B cell (primary cell): ENCODE measurements at regions of chr1 and their contacts with region 1.

Region 1: DNA sequence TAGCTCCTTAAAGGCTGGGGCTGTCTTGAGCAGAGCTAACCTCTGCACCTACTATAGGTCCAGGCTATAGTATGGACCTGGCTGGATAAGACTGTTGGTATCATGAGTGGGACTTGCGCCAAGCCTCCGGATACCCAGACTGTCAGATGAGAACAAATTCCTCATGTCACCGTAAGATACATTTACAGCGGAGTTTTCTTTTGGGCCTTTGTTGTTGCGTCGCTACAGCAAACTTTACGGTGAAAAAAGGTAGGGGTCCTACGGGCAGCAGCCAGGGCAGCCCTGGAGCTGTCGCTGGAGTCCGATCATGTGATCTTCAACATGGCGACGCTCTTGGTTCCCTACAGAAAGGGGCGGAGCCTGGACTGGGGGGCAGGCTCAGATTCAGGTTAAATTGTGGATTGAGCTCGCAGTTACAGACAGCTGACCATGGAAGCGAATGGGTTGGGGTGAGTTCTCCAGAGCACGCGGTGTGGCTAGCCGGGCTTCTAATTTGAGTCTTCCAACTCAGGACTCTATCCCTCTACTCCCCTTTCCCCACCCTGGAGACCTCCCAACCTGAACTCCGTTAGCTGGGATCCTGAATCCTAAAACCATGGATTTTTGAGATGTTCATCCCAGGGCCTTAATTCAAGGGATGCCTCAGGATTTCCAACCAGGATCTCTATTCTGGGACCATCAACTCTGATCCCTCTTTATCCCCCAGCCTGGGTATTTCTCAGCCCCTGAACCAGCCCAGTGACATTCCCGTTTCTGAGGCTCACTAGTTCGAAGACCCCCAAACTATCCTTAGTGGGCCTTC is at the start of gene UROD:
- DNase-seq: peak; percentile 94
- ATAC-seq: peak; percentile 83
- H3K4me3 ChIP-seq: peak within 1 kb of the TSS; percentile 59 to 89 (median 78)
- H3K4me3 Mint-ChIP-seq: peak within 1 kb of the TSS; percentile 91
- H3K27ac ChIP-seq: peak within 1 kb of the TSS; percentile 66 to 79
- H3K27ac Mint-ChIP-seq: peak within 1 kb of the TSS; percentile 89
- H3K4me1 ChIP-seq: peaks cover 31 to 42% of the 10 kb centered on the region in 2 donors
- H3K4me1 Mint-ChIP-seq: peaks cover 43% of the 10 kb centered on the region
- H3K27me3 ChIP-seq: no peaks in the 10 kb centered on the region
- H3K27me3 Mint-ChIP-seq: no peaks in the 10 kb centered on the region
- CTCF ChIP-seq: no peak
- total RNA-seq, gene UROD: 57.3 and 65.5 TPM in 2 replicates

Region 2: GRCh38 chr1:44660176-44660575 is 351.9 kb before region 1 on chr1:
- CTCF ChIA-PET with region 1: no interaction called
- POLR2A ChIA-PET with region 1: no interaction called
- intact Hi-C with region 1: no loop called
- DNase-seq: no peak
- ATAC-seq: no peak
- H3K4me3 ChIP-seq: no peak overlapping the region
- H3K4me3 Mint-ChIP-seq: no peak overlapping the region
- H3K27ac ChIP-seq: no peak overlapping the region
- H3K27ac Mint-ChIP-seq: no peak overlapping the region
- H3K4me1 ChIP-seq: peaks cover 9% of the 10 kb centered on the region in 2 donors
- H3K4me1 Mint-ChIP-seq: peaks cover 13% of the 10 kb centered on the region
- H3K27me3 ChIP-seq: no peaks in the 10 kb centered on the region
- H3K27me3 Mint-ChIP-seq: no peaks in the 10 kb centered on the region
- CTCF ChIP-seq: no peak

Region 3: DNA sequence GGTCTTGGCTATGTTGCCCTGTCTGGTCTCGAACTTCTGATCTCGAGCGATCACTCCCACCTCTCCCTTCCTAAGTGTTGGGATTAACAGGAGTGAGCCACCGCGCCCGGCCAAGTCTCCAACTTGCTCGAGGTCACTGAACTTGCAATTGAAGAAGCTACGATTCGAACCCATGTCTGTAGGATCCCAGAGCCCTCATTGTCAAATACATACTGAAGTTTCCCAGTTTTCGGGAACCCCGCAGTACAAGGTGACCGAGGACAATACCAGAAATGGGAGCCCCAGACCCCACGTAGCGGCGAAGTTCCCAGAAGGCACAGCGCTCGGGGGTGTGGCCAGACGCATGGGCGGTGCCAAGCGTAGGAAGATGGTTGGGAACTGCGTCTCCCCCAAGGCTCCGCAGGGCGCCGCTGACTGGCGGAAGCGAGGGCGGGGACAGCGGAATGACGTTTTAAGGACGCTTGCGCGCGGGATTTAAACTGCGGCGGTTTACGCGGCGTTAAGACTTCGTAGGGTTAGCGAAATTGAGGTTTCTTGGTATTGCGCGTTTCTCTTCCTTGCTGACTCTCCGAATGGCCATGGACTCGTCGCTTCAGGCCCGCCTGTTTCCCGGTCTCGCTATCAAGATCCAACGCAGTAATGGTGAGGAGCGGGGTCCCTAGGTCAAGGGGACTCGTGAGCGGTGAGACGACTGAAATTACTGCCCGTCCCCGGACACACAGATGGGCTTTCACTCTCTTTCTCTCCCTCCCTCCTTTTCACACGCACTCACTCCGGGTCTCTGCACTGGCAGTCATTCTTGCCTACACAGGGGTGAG is 272.5 kb before region 1 on chr1 and contains the start of gene KIF2C:
- CTCF ChIA-PET with region 1: no interaction called
- POLR2A ChIA-PET with region 1: no interaction called
- intact Hi-C with region 1: loop called (anchors 1 kb)
- DNase-seq: peak; percentile 97
- ATAC-seq: peak; percentile 100
- H3K4me3 ChIP-seq: peak within 1 kb of the TSS; percentile 54 to 90 (median 87)
- H3K4me3 Mint-ChIP-seq: peak within 1 kb of the TSS; percentile 95
- H3K27ac ChIP-seq: peak within 1 kb of the TSS; percentile 60 to 85
- H3K27ac Mint-ChIP-seq: peak within 1 kb of the TSS; percentile 93
- H3K4me1 ChIP-seq: peaks cover 7 to 12% of the 10 kb centered on the region in 2 donors
- H3K4me1 Mint-ChIP-seq: peaks cover 17% of the 10 kb centered on the region
- H3K27me3 ChIP-seq: no peaks in the 10 kb centered on the region
- H3K27me3 Mint-ChIP-seq: no peaks in the 10 kb centered on the region
- CTCF ChIP-seq: no peak
- total RNA-seq, gene KIF2C: 0.25 and 0.51 TPM in 2 replicates

Region 4: DNA sequence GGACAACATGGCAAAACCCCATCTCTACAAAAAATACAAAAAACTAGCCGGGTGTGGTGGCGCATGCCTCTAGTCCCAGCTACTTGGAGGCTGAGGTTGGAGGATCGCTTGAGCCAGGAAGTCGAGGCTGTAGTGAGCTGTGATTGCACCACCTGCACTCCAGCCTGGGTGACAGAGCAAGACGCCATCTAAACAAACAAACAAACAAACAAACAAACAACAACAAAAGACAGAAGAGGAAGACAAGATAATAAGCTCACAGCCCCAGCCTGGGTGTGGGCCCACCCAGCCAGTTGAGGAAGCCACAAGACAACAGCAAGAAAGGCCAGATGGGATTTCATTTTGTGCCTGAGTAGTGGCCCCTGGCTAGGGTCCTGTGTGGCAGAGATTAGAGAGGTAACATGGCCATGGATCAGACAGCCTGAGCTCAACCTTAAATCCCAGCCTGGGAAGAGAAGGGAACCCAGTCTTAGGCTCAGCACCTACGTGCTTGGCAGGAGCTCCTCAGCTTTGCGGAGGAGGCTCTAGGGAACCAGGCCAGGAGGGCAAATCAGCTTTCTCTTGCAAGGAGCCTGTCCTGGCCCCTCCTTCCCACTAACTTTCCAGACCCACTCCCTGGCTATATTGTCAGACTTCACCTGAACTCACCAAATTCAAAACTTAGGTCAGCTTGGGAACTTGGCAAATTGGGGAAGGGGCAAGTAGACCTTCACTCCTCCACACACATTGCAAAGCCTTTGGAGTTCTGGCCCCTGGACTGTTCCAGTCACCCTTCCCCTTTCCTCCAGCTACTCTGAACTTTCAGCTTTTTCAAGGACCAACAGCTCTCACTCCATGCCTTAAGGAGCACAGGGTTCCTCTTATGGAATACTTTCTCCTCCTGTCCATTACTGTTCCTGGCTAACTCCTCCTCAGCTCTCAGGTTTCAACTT is 219.0 kb before region 1 on chr1:
- CTCF ChIA-PET with region 1: interaction called, 24 read pairs
- POLR2A ChIA-PET with region 1: interaction called, 7 read pairs
- intact Hi-C with region 1: no loop called
- DNase-seq: no peak
- ATAC-seq: no peak
- H3K4me3 ChIP-seq: no peak overlapping the region
- H3K4me3 Mint-ChIP-seq: no peak overlapping the region
- H3K27ac ChIP-seq: no peak overlapping the region
- H3K27ac Mint-ChIP-seq: no peak overlapping the region
- H3K4me1 ChIP-seq: no peaks in the 10 kb centered on the region
- H3K4me1 Mint-ChIP-seq: no peaks in the 10 kb centered on the region
- H3K27me3 ChIP-seq: no peaks in the 10 kb centered on the region
- H3K27me3 Mint-ChIP-seq: no peaks in the 10 kb centered on the region
- CTCF ChIP-seq: no peak

Region 5: DNA sequence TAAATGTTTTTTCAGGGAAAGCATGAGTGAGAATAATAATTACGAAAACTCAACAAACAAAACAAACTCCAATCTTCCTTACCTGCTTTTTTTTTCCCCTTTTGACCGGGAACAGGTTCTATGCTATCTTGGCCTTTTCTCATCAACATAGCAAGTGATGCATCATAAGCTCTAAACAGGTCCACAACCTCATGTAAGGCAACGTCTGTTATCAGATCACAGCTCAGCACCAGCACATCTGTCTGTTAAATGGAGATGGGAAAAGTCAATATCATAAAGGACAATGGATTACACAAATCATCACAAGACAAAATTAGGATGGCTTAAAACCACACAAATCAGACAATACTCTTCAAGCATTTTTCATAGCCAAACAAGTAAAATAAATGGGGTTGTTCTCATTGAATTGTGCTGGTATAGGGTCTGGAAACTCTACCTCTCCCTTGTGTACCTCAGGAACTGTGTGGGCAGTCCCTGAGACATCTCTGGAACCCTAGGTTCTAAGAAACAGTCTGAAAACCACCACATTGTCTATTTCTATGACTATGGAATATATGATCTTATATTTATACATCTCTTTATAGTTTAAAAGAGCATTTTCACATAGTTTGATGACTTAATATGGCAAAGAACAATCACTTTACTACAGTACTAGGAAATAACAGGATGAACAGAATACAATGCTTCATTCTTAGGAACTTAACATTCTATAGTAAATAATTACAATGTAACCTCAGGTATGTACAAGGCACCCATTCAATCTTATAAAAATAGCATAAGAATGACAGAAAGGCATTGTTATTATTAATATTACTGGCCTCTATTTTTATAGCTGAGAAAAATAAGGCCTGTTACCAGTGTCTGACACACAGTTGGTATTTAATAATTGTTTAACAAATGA is 70.4 kb before region 1 on chr1:
- CTCF ChIA-PET with region 1: no interaction called
- POLR2A ChIA-PET with region 1: no interaction called
- intact Hi-C with region 1: no loop called
- DNase-seq: no peak
- ATAC-seq: no peak
- H3K4me3 ChIP-seq: no peak overlapping the region
- H3K4me3 Mint-ChIP-seq: no peak overlapping the region
- H3K27ac ChIP-seq: no peak overlapping the region
- H3K27ac Mint-ChIP-seq: no peak overlapping the region
- H3K4me1 ChIP-seq: no peaks in the 10 kb centered on the region
- H3K4me1 Mint-ChIP-seq: no peaks in the 10 kb centered on the region
- H3K27me3 ChIP-seq: no peaks in the 10 kb centered on the region
- H3K27me3 Mint-ChIP-seq: no peaks in the 10 kb centered on the region
- CTCF ChIP-seq: no peak

Region 6: DNA sequence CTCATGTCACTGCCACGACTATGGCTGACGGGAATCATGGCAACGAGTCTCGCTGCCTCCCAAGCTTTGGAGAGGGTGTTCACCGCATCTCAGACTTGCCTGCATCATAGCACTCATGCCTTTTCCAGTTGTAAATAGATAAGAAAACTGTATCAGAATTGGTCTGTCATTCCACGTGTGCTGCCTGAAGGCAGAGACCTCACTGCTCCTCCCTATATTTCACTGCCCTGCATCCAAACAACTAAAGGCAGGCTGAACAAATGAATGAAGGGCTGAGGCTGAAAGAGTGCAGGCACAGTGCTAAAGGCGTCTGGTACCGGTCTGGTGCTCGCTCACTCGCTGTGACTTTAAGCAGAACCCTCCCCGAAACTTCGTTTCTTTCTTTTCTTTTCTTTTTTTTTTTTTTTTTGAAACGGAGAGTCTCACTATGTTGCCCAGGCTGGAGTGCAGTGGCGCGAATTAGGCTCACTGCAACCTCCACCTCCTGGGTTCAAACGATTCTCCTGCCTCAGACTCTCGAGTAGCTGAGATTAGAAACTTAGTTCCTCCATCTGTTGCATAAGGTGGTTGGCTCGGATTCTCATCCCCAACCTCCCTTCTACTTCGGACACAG is 26.2 kb before region 1 on chr1:
- CTCF ChIA-PET with region 1: interaction called, 37 read pairs
- POLR2A ChIA-PET with region 1: interaction called, 30 read pairs
- intact Hi-C with region 1: loop called (anchors 1 kb)
- DNase-seq: no peak
- ATAC-seq: no peak
- H3K4me3 ChIP-seq: peak overlapping the region; percentile 80 to 91 (median 87)
- H3K4me3 Mint-ChIP-seq: peak overlapping the region; percentile 100
- H3K27ac ChIP-seq: peak overlapping the region; percentile 34 to 66
- H3K27ac Mint-ChIP-seq: peak overlapping the region; percentile 86
- H3K4me1 ChIP-seq: peaks cover 9 to 19% of the 10 kb centered on the region in 2 donors
- H3K4me1 Mint-ChIP-seq: peaks cover 18% of the 10 kb centered on the region
- H3K27me3 ChIP-seq: no peaks in the 10 kb centered on the region
- H3K27me3 Mint-ChIP-seq: no peaks in the 10 kb centered on the region
- CTCF ChIP-seq: no peak

Region 7: DNA sequence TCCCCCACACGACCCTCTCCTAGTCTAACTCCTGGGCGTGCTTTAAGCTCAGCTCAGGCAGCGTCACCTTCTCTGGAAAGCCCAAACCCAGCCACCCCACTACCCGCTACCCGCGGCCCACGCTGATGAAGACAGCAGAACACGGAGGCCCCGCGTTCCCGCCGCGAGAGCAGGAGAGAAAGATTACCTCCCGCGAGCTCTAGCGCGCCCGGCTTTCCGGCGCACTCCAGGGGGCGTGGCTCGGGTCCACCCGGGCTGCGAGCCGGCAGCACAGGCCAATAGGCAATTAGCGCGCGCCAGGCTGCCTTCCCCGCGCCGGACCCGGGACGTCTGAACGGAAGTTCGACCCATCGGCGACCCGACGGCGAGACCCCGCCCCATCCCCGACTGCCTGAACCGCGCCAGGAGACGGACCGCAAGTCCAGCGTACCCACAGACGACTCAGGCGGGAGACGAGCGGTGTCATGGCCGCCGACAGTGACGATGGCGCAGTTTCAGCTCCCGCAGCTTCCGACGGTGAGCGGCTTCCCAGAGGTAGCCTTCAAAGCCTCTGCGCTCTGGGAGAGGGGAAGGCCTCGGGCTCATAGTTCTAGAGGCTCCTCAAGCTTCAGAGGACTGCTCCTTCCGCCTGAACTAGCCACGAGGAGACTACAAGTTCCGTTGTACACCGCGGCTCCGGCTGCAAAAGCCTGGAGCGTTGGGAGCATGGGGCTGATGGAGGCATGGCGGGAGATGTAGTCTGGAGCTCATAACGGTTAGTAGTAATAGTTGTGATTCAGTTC is 327.9 kb after region 1 on chr1 and contains the starts of genes MUTYH and TOE1:
- CTCF ChIA-PET with region 1: interaction called, 13 read pairs
- POLR2A ChIA-PET with region 1: interaction called, 21 read pairs
- intact Hi-C with region 1: loop called (anchors 1 kb)
- DNase-seq: peak; percentile 92
- ATAC-seq: peak; percentile 88
- H3K4me3 ChIP-seq: peak within 1 kb of the TSS; percentile 83 to 97 (median 86)
- H3K4me3 Mint-ChIP-seq: peak within 1 kb of the TSS; percentile 91
- H3K27ac ChIP-seq: peak within 1 kb of the TSS; percentile 96
- H3K27ac Mint-ChIP-seq: peak within 1 kb of the TSS; percentile 100
- H3K4me1 ChIP-seq: peaks cover 20 to 33% of the 10 kb centered on the region in 2 donors
- H3K4me1 Mint-ChIP-seq: peaks cover 38% of the 10 kb centered on the region
- H3K27me3 ChIP-seq: no peaks in the 10 kb centered on the region
- H3K27me3 Mint-ChIP-seq: no peaks in the 10 kb centered on the region
- CTCF ChIP-seq: no peak
- total RNA-seq, gene MUTYH: 68.1 and 68.5 TPM in 2 replicates
- total RNA-seq, gene TOE1: 21.9 and 24.7 TPM in 2 replicates